ENCODE measurements at regions of chr14 and their contacts with region 1.

Region 1: GRCh38 chr14:85146779-85147178 is 383.2 kb upstream of the FLRT2 start:
- DNase-seq: no peak
- H3K4me3 ChIP-seq: no peak overlapping the region
- CTCF ChIP-seq: no peak
- POLR2A ChIP-seq: no peak

Region 2: GRCh38 chr14:85233756-85234155 is 87.0 kb after region 1 on chr14:
- intact Hi-C with region 1: no loop called
- DNase-seq: no peak
- H3K4me3 ChIP-seq: no peak overlapping the region
- CTCF ChIP-seq: no peak
- POLR2A ChIP-seq: no peak

Region 3: GRCh38 chr14:85416771-85417170 is 270.0 kb after region 1 on chr14:
- intact Hi-C with region 1: no loop called
- DNase-seq: no peak
- H3K4me3 ChIP-seq: no peak overlapping the region
- CTCF ChIP-seq: no peak
- POLR2A ChIP-seq: no peak

Region 4: GRCh38 chr14:86912709-86913108 is 1765.9 kb after region 1 on chr14:
- intact Hi-C with region 1: loop called (anchors 5 kb)
- DNase-seq: no peak
- H3K4me3 ChIP-seq: no peak overlapping the region
- CTCF ChIP-seq: no peak
- POLR2A ChIP-seq: no peak

Measured in lower leg skin (tissue), 4 donors.